B cell (primary cell): ENCODE measurements at regions of chr1 and their contacts with region 1.

Region 1: DNA sequence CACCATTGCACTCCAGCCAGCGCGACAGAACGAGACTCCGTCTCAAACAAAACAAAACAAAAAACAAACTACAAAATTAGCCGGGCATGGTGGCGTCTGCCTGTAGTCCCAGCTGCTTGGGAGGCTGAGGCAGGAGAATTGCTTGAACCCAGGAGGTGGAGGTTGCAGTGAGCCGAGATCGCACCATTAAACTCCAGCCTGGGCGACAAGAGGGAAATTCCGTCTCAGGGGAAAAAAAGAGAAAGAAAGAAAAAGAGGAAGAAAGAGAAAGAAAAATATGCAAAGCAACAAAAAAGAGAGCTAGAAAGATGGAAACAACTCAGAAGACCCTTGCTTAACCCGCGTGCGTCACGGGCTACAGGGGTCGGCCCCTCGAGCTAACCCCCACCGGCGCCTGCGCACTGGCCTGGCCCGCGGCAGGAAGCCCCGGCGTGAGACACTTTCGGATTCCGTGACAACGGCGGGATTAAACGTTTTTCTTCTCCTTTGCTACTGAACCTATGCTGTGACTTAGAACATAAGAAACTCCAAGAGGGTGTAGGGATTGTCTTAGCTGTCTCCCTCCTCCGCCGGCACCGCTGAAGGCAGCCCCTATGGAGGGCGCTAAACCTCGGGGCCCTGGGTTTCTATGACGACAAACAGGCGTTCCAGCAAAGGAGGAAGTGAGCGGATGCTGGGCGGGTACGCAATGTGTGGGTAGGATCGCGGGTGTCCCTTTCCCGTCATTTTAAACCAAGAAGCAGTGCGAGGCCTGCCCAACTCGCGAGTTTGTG is at the start of gene AXDND1:
- DNase-seq: peak; percentile 97
- ATAC-seq: peak; percentile 90
- H3K4me3 ChIP-seq: peak within 1 kb of the TSS; percentile 59 to 85 (median 74)
- H3K4me3 Mint-ChIP-seq: peak within 1 kb of the TSS; percentile 97
- H3K27ac ChIP-seq: peak within 1 kb of the TSS; percentile 93 to 100
- H3K27ac Mint-ChIP-seq: peak within 1 kb of the TSS; percentile 99
- H3K4me1 ChIP-seq: peaks cover 4 to 12% of the 10 kb centered on the region in 2 donors
- H3K4me1 Mint-ChIP-seq: peaks cover 7% of the 10 kb centered on the region
- H3K27me3 ChIP-seq: no peaks in the 10 kb centered on the region
- H3K27me3 Mint-ChIP-seq: no peaks in the 10 kb centered on the region
- CTCF ChIP-seq: no peak
- total RNA-seq, gene AXDND1: 0.90 and 1.1 TPM in 2 replicates

Region 2: GRCh38 chr1:178532392-178532791 is 833.1 kb before region 1 on chr1:
- CTCF ChIA-PET with region 1: interaction called, 4 read pairs
- POLR2A ChIA-PET with region 1: no interaction called
- intact Hi-C with region 1: loop called (anchors 1 kb)
- DNase-seq: peak; percentile 87
- ATAC-seq: peak; percentile 90
- H3K4me3 ChIP-seq: no peak overlapping the region
- H3K4me3 Mint-ChIP-seq: no peak overlapping the region
- H3K27ac ChIP-seq: no peak overlapping the region
- H3K27ac Mint-ChIP-seq: no peak overlapping the region
- H3K4me1 ChIP-seq: peaks cover 0 to 9% of the 10 kb centered on the region in 2 donors
- H3K4me1 Mint-ChIP-seq: peaks cover 4% of the 10 kb centered on the region
- H3K27me3 ChIP-seq: no peaks in the 10 kb centered on the region
- H3K27me3 Mint-ChIP-seq: no peaks in the 10 kb centered on the region
- CTCF ChIP-seq: peak; percentile 98

Region 3: DNA sequence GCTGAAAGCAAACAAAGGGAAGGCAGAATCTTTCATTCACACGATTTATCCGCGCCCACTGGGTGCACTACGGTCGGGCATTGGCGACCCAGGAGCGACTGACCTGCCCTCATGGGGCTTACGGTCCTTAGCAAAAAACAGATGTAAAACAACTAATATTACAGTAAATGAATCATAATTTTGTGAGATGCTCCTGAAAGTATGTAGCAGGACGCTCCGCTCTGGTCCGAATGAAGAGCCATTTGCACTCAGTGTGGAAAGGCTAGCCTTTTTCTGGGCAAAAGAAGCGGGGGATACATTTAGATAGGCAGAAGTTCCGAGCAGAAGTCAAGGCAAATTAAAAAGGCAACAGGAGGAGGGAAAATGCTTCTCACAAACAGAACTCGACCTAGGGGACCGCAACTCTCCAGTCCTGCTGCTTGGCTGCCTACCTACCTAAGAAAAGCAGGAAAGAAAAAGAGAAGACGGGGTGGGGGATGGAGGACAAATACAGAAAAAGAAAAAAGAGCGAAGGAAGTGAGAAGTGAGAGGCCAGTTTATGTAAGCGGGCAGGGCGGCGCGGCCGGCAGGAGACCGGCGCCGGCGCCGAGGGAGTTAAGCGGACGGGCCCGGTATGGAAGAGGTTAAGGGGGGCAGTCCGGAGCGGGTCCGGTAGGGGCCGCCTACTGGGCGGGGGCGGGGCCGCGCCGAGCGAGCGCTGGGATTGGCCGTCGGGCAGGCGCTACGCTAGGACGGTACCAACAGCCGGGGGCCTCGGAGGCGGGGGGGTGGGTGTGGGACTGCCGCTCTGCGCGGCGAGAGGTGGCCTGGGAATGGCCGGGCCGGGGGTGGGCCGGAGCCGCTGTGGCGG is 340.2 kb before region 1 on chr1 and contains the start of gene FAM20B:
- CTCF ChIA-PET with region 1: no interaction called
- POLR2A ChIA-PET with region 1: no interaction called
- intact Hi-C with region 1: loop called (anchors 1 kb)
- DNase-seq: peak; percentile 95
- ATAC-seq: peak; percentile 80
- H3K4me3 ChIP-seq: peak within 1 kb of the TSS; percentile 77 to 97 (median 87)
- H3K4me3 Mint-ChIP-seq: peak within 1 kb of the TSS; percentile 97
- H3K27ac ChIP-seq: peak within 1 kb of the TSS; percentile 92 to 95
- H3K27ac Mint-ChIP-seq: peak within 1 kb of the TSS; percentile 95
- H3K4me1 ChIP-seq: peaks cover 29 to 36% of the 10 kb centered on the region in 2 donors
- H3K4me1 Mint-ChIP-seq: peaks cover 45% of the 10 kb centered on the region
- H3K27me3 ChIP-seq: no peaks in the 10 kb centered on the region
- H3K27me3 Mint-ChIP-seq: no peaks in the 10 kb centered on the region
- CTCF ChIP-seq: no peak
- total RNA-seq, gene FAM20B: 28.5 and 32.8 TPM in 2 replicates

Region 4: DNA sequence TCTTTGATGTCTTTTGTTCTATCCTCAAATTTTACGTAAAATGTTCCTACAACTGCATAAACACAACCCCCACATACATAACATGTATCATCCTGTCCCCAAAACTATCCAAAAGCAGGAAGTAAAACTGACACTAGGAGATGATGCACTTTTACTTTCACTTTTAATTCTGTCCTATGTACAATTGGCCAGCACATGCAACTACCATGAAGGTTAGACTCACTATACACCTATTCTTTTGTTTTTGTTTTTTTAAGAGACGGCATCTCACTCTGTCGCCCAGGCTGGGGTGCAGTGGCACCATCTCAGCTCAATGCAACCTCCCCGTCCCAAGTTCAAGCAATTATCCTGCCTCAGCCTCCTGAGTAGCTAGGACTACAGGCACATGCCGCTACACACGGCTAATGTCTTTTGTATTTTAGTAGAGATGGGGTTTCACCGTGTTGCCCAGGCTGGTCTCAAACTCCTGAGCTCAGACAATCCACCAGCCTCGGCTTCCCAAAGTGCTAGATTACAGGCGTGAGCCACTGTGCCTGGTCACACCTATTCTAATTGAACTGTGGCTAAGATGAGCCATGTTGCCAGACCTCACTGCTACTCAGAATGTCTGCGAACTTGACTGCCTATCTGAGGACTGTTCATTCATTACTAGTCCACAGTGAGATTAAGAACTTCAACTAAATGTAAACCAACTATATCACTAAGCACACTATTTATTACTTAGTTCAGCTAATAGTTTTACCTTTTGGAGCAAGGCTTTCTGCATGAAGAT is 235.6 kb before region 1 on chr1:
- CTCF ChIA-PET with region 1: interaction called, 74 read pairs
- POLR2A ChIA-PET with region 1: interaction called, 4 read pairs
- intact Hi-C with region 1: loop called (anchors 1 kb)
- DNase-seq: peak; percentile 79
- ATAC-seq: peak; percentile 96
- H3K4me3 ChIP-seq: peak overlapping the region in 3 of 5 experiments; percentile 10 to 42 (median 13)
- H3K4me3 Mint-ChIP-seq: peak overlapping the region; percentile 35
- H3K27ac ChIP-seq: peak overlapping the region; percentile 78 to 83
- H3K27ac Mint-ChIP-seq: peak overlapping the region; percentile 75
- H3K4me1 ChIP-seq: peaks cover 12 to 13% of the 10 kb centered on the region in 2 donors
- H3K4me1 Mint-ChIP-seq: peaks cover 16% of the 10 kb centered on the region
- H3K27me3 ChIP-seq: no peaks in the 10 kb centered on the region
- H3K27me3 Mint-ChIP-seq: no peaks in the 10 kb centered on the region
- CTCF ChIP-seq: no peak

Region 5: DNA sequence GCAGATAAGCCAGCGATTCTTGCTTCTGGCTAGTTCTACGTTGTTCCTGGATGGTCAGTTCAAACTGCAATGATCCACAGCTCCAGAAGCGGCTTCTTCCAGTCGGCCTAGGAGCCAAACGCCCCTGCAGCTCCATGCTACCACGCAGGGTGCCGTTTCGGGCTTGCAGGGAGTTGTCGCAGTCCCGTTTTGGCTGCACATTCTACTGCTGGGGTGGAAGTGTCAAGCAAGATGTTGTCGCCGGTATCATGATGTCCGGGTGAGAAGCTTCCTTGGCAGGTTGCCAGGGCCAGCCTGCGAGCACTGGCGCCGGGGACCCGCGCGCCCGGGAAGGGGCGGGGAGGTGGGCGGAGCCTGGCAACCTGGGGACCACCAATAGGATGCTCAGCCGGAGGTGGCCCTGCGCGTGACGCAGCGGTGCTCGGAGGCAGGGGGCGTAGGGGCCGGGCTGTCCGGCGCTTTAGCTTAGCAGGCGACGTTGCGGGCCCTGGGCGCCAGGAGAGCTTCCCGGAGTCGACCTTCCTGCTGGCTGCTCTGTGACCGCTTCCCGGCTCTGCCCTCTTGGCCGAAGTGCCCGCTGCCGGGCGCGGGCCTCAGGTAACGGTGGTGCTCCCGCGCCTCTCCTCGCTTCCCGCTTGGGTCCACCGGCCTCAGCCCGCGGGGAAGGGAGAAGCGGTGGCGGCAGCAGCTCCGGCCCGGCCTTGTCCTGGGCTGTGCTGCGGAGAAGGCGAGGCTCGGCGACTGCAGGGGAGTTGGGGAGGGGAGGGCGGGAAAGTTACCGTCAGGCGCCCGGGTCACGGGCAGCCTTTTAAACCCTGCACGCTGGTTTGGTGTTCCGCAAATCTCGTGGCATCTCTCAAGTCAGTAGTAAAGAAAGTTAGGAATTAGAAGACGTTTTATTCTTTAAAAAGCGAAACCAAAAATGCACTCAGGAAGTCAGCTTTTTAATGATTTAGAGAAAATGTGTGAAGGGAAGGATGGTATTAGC is 71.9 kb before region 1 on chr1 and contains the start of gene SOAT1:
- CTCF ChIA-PET with region 1: interaction called, 11 read pairs
- POLR2A ChIA-PET with region 1: interaction called, 7 read pairs
- intact Hi-C with region 1: loop called (anchors 1 kb)
- DNase-seq: peak; percentile 93
- ATAC-seq: peak; percentile 99
- H3K4me3 ChIP-seq: peak within 1 kb of the TSS; percentile 89 to 99 (median 92)
- H3K4me3 Mint-ChIP-seq: peak within 1 kb of the TSS; percentile 93
- H3K27ac ChIP-seq: peak within 1 kb of the TSS; percentile 79 to 84
- H3K27ac Mint-ChIP-seq: peak within 1 kb of the TSS; percentile 82
- H3K4me1 ChIP-seq: peaks cover 27 to 39% of the 10 kb centered on the region in 2 donors
- H3K4me1 Mint-ChIP-seq: peaks cover 42% of the 10 kb centered on the region
- H3K27me3 ChIP-seq: no peaks in the 10 kb centered on the region
- H3K27me3 Mint-ChIP-seq: no peaks in the 10 kb centered on the region
- CTCF ChIP-seq: peak; percentile 31
- total RNA-seq, gene SOAT1: 25.1 and 27.1 TPM in 2 replicates

Region 6: GRCh38 chr1:179882243-179883039 is 516.9 kb after region 1 on chr1 and contains the start of gene TOR1AIP1:
- CTCF ChIA-PET with region 1: no interaction called
- POLR2A ChIA-PET with region 1: no interaction called
- intact Hi-C with region 1: loop called (anchors 10 kb)
- DNase-seq: peak; percentile 100
- ATAC-seq: peak; percentile 75
- H3K4me3 ChIP-seq: peak within 1 kb of the TSS; percentile 78 to 99 (median 96)
- H3K4me3 Mint-ChIP-seq: peak within 1 kb of the TSS; percentile 99
- H3K27ac ChIP-seq: peak within 1 kb of the TSS; percentile 99 to 100
- H3K27ac Mint-ChIP-seq: peak within 1 kb of the TSS; percentile 100
- H3K4me1 ChIP-seq: peaks cover 20 to 40% of the 10 kb centered on the region in 2 donors
- H3K4me1 Mint-ChIP-seq: peaks cover 53% of the 10 kb centered on the region
- H3K27me3 ChIP-seq: no peaks in the 10 kb centered on the region
- H3K27me3 Mint-ChIP-seq: no peaks in the 10 kb centered on the region
- CTCF ChIP-seq: peak; percentile 59
- total RNA-seq, gene TOR1AIP1: 43.3 and 50.0 TPM in 2 replicates